ENCODE measurements at regions of chr14 and their contacts with region 1.

Region 1: GRCh38 chr14:103444837-103445524 is 59.8 kb downstream of the MARK3 start:
- DNase-seq: no peak
- H3K4me3 ChIP-seq: no peak overlapping the region
- H3K27ac ChIP-seq: peak overlapping the region; percentile 31
- H3K4me1 ChIP-seq: peaks cover 86% of the 10 kb centered on the region
- H3K27me3 ChIP-seq: no peaks in the 10 kb centered on the region
- CTCF ChIP-seq: no peak

Region 2: GRCh38 chr14:103391048-103391447 is 53.9 kb before region 1 on chr14:
- intact Hi-C with region 1: loop called (anchors 10 kb)
- DNase-seq: no peak
- H3K4me3 ChIP-seq: no peak overlapping the region
- H3K27ac ChIP-seq: peak overlapping the region; percentile 87
- H3K4me1 ChIP-seq: peaks cover 93% of the 10 kb centered on the region
- H3K27me3 ChIP-seq: no peaks in the 10 kb centered on the region
- CTCF ChIP-seq: peak; percentile 68